CD4-positive, alpha-beta T cell (primary cell): ENCODE measurements at regions of chr10 and their contacts with region 1.

Region 1: GRCh38 chr10:28381903-28382347 is 79.1 kb upstream of the MPP7 start:
- DNase-seq: peak; percentile 71 to 92 (median 80)
- ATAC-seq: peak; percentile 98
- H3K4me3 ChIP-seq: no peak overlapping the region
- H3K4me3 Mint-ChIP-seq: no peak overlapping the region
- H3K27ac ChIP-seq: no peak overlapping the region
- H3K27ac Mint-ChIP-seq: peak overlapping the region; percentile 9
- H3K4me1 ChIP-seq: peaks cover 18% of the 10 kb centered on the region
- H3K4me1 Mint-ChIP-seq: peaks cover 41% of the 10 kb centered on the region
- H3K27me3 ChIP-seq: no peaks in the 10 kb centered on the region
- H3K27me3 Mint-ChIP-seq: no peaks in the 10 kb centered on the region
- CTCF ChIP-seq: peak; percentile 98

Region 2: GRCh38 chr10:27558612-27559020 is 823.3 kb before region 1 on chr10:
- CTCF ChIA-PET with region 1: no interaction called
- POLR2A ChIA-PET with region 1: no interaction called
- intact Hi-C with region 1: loop called in 1 of 2 experiments (anchors 5 kb)
- DNase-seq: peak in 7 of 14 experiments; percentile 4 to 58 (median 36)
- ATAC-seq: no peak
- H3K4me3 ChIP-seq: no peak overlapping the region
- H3K4me3 Mint-ChIP-seq: no peak overlapping the region
- H3K27ac ChIP-seq: no peak overlapping the region
- H3K27ac Mint-ChIP-seq: no peak overlapping the region
- H3K4me1 ChIP-seq: peaks cover under 1% of the 10 kb centered on the region
- H3K4me1 Mint-ChIP-seq: no peaks in the 10 kb centered on the region
- H3K27me3 ChIP-seq: no peaks in the 10 kb centered on the region
- H3K27me3 Mint-ChIP-seq: no peaks in the 10 kb centered on the region
- CTCF ChIP-seq: peak; percentile 46

Region 3: DNA sequence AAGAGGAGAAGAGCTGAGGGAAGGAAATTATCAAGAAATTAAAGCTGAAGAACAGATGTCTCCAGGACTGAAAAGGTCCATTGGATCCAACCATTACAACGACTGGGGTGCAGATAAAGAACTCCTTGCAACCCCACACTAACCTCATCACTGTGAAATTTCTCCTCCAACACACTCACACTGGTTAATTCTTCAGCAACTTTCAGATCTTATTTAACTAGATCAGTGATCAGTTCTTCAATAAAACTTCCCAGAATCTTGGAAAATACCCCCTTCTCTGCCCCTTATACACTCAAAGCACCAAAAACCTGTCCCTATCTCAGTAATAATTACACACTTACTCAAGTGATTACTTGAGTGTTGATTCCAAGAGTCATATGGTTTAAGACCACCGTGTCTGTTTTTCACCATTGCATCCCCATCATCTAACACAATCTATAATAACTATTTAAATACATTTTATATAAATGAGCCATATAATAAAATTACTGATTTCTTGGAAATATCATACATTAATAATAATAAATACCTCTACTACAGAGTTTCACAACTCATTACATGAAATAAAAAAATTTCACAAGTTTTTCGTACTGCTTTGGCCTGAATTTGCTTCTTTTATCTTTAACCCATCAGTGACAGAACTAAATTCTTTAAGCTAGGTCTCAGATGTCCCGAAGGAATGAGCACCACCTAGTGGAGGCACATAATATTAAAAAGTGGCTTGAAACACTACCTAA is 202.8 kb before region 1 on chr10:
- CTCF ChIA-PET with region 1: interaction called, 5 read pairs
- POLR2A ChIA-PET with region 1: no interaction called
- intact Hi-C with region 1: loop called in 1 of 2 experiments (anchors 5 kb)
- DNase-seq: peak in 5 of 14 experiments; percentile 8 to 78 (median 71)
- ATAC-seq: peak; percentile 75
- H3K4me3 ChIP-seq: peak overlapping the region; percentile 50
- H3K4me3 Mint-ChIP-seq: peak overlapping the region; percentile 89
- H3K27ac ChIP-seq: peak overlapping the region in 1 of 2 donors; percentile 15
- H3K27ac Mint-ChIP-seq: peak overlapping the region; percentile 87
- H3K4me1 ChIP-seq: peaks cover 9% of the 10 kb centered on the region
- H3K4me1 Mint-ChIP-seq: peaks cover 55% of the 10 kb centered on the region
- H3K27me3 ChIP-seq: no peaks in the 10 kb centered on the region
- H3K27me3 Mint-ChIP-seq: no peaks in the 10 kb centered on the region
- CTCF ChIP-seq: peak; percentile 90

Region 4: DNA sequence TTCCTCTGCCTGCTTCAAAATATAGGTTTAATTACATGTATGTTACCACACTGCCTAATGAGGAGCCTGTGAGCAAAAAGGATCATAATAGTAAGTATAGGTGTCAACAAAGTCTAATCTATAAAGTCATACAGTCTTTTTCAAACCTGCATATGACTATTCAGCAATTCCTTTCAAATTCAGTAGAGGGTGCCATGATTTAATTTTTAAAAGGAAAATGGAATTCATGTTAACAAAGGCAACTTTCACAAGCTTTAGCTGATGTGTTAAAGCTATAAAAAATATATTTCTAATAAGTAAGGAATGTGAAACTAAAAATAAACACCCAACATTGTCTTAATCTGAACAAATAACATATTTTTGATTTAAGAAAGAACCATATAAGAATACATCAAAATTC is 131.1 kb before region 1 on chr10:
- CTCF ChIA-PET with region 1: interaction called, 13 read pairs
- POLR2A ChIA-PET with region 1: interaction called, 15 read pairs
- intact Hi-C with region 1: loop called (anchors 1 kb)
- DNase-seq: peak in 3 of 14 experiments; percentile 44 to 50 (median 48)
- ATAC-seq: peak; percentile 56
- H3K4me3 ChIP-seq: no peak overlapping the region
- H3K4me3 Mint-ChIP-seq: no peak overlapping the region
- H3K27ac ChIP-seq: no peak overlapping the region
- H3K27ac Mint-ChIP-seq: no peak overlapping the region
- H3K4me1 ChIP-seq: no peaks in the 10 kb centered on the region
- H3K4me1 Mint-ChIP-seq: peaks cover 67% of the 10 kb centered on the region
- H3K27me3 ChIP-seq: no peaks in the 10 kb centered on the region
- H3K27me3 Mint-ChIP-seq: no peaks in the 10 kb centered on the region
- CTCF ChIP-seq: peak; percentile 52

Region 5: GRCh38 chr10:28367929-28368484 is 13.9 kb before region 1 on chr10:
- CTCF ChIA-PET with region 1: interaction called, 11 read pairs
- POLR2A ChIA-PET with region 1: interaction called, 38 read pairs
- intact Hi-C with region 1: loop called in 1 of 2 experiments (anchors 2 kb)
- DNase-seq: peak; percentile 22 to 92 (median 56)
- ATAC-seq: peak; percentile 92
- H3K4me3 ChIP-seq: peak overlapping the region; percentile 6
- H3K4me3 Mint-ChIP-seq: peak overlapping the region; percentile 80
- H3K27ac ChIP-seq: peak overlapping the region; percentile 69 to 79
- H3K27ac Mint-ChIP-seq: peak overlapping the region; percentile 91
- H3K4me1 ChIP-seq: peaks cover 59% of the 10 kb centered on the region
- H3K4me1 Mint-ChIP-seq: peaks cover 58% of the 10 kb centered on the region
- H3K27me3 ChIP-seq: no peaks in the 10 kb centered on the region
- H3K27me3 Mint-ChIP-seq: no peaks in the 10 kb centered on the region
- CTCF ChIP-seq: no peak

Region 6: DNA sequence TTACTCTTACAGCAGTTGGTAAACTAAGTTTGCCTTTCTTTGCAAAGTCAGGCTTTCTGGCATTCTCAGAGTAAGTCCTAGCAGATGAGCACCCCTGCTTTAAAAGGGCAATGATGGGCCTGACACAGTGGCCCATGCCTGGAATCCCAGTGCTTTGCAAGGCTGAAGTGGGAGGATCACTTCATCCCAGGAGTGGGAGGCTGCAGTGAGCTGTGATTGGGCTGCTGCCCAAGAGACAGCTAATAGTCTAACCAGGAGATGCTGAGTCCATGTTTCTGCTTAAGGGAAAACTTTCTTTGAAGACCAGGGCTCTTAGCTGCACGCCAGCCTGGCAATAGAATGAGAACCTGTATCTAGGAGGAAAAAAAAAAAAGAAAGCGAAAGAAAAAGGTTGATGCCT is 21.2 kb after region 1 on chr10:
- CTCF ChIA-PET with region 1: no interaction called
- POLR2A ChIA-PET with region 1: no interaction called
- intact Hi-C with region 1: no loop called
- DNase-seq: no peak
- ATAC-seq: no peak
- H3K4me3 ChIP-seq: no peak overlapping the region
- H3K4me3 Mint-ChIP-seq: no peak overlapping the region
- H3K27ac ChIP-seq: peak overlapping the region in 1 of 2 donors; percentile 65
- H3K27ac Mint-ChIP-seq: no peak overlapping the region
- H3K4me1 ChIP-seq: no peaks in the 10 kb centered on the region
- H3K4me1 Mint-ChIP-seq: no peaks in the 10 kb centered on the region
- H3K27me3 ChIP-seq: peaks cover 0 to 3% of the 10 kb centered on the region in 2 experiments
- H3K27me3 Mint-ChIP-seq: peaks cover 5% of the 10 kb centered on the region
- CTCF ChIP-seq: no peak